ENCODE measurements at regions of chr4 and their contacts with region 1.

Region 1: DNA sequence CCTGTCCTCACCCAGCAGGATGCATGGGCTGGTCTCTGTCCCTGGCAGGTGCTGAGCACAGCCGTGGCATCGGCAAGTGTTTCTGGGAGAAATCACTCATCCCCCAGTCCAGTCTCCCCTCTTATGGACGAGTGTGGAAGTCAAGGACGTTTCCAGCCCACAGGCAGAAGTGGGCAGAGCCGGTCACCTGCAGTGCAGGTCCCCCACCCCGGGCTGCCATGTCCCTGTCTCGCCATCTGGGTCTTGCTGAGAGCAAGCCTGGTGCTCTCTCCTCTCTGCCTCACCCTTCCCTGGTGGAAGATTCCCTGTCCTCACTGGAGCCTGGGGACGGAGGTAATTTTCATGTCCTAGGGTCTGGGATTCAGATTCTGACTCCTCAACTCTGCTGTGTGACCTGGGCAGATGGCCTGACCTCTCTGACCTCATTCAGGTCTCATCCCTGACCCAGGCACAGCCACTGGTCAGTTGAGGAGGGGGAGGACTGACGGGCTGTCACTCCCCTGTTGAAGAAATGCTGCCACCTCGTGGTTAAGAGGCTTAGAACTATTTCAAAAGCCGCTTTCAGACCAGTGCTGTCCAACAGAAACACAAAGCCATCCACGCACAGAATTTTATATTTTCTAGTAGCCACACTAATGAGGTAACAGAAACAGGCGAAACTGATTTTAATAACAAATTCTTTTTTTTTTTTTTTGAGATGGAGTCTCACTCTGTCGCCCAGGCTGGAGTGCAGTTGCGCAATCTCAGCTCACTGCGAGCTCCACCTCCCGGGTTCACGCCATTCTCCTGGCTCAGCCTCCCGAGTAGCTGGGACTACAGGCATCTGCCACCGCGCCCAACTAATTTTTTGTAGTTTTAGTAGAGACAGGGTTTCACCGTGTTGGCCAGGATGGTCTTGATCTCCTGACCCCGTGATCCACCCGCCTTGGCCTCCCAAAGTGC is 1.8 kb downstream of the CPZ start:
- DNase-seq: peak; percentile 58
- H3K4me3 ChIP-seq: no peak overlapping the region
- H3K27ac ChIP-seq: no peak overlapping the region
- H3K4me1 ChIP-seq: no peaks in the 10 kb centered on the region
- H3K27me3 ChIP-seq: peaks cover 27% of the 10 kb centered on the region
- CTCF ChIP-seq: peak; percentile 48

Region 2: DNA sequence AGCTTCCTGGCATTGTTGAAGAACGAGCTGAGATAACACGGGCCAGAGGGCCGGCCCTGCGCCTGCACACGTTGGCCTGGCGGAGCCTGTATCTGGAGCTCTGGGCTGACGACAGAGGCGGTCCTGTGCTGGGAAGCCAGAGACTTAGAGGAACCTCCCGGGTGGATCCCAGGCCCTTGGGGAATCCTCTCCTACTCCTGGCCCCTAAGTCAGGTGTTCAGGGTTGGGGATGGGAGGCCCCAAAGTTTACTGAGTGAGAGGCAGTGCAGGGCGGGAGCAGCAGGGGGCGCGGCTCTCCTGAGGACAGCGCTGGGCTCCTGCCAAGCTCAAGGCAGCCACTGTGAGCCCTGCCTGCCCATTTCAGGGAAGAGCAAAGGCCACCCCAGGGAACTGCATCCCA is 327.3 kb before region 1 on chr4:
- intact Hi-C with region 1: loop called (anchors 10 kb)
- DNase-seq: peak; percentile 70
- H3K4me3 ChIP-seq: no peak overlapping the region
- H3K27ac ChIP-seq: no peak overlapping the region
- H3K4me1 ChIP-seq: no peaks in the 10 kb centered on the region
- H3K27me3 ChIP-seq: peaks cover 13% of the 10 kb centered on the region
- CTCF ChIP-seq: peak; percentile 51

Region 3: DNA sequence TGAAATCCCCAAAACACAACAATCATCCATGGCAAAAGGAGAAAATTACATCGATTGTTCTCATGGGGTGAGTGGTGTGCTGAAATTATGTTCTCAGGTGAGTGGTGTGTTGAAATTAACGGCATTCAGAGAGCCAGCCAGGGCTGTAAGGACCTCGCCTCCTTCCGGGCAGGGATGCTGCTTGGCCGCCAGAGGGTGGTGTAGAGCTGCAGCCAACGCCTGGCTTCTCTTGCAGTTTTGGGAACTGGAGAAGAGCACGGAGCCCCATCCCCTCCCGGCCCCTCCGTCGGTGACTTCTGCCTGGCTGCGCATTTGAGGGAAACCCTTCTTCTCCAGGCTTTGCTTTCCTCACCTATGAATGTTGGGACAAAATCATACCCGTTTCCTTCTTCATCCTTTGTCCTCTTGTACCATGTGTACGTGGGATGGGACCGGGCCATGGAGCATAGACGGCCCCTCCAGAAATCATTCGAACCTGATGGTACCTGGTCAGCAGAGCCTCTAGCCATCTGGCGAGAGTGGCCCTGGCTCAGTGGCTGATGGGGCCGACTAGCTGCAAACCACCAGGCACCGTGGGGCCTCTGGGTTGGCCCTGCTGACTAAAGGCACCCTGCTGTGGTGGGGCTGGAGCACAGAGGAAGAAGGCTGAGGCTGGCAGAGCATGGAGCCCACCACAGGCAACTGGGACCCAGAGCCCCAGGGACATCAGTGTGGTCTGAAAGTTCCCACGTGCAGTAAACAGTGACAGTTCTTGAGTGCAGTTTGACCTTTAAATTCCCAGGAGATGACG is 125.4 kb before region 1 on chr4:
- intact Hi-C with region 1: loop called (anchors 2 kb)
- DNase-seq: peak; percentile 57
- H3K4me3 ChIP-seq: no peak overlapping the region
- H3K27ac ChIP-seq: no peak overlapping the region
- H3K4me1 ChIP-seq: no peaks in the 10 kb centered on the region
- H3K27me3 ChIP-seq: no peaks in the 10 kb centered on the region
- CTCF ChIP-seq: peak; percentile 79

Measured in colonic mucosa (tissue), 4 donors.